ENCODE measurements at regions of chr1 and their contacts with region 1.

Region 1: GRCh38 chr1:96580920-96581319 is 140.7 kb upstream of the PTBP2 start:
- DNase-seq: peak in 1 of 2 experiments; percentile 44
- H3K4me3 ChIP-seq: peak overlapping the region in 2 of 4 experiments; percentile 4 to 40; a peak in 2 of 8 replicates
- H3K27ac ChIP-seq: no peak overlapping the region
- H3K4me1 ChIP-seq: peaks cover 2 to 20% (median 9%) of the 10 kb centered on the region in 4 experiments; a peak in 5 of 7 replicates
- H3K27me3 ChIP-seq: no peaks in the 10 kb centered on the region
- CTCF ChIP-seq: no peak
- EP300 ChIP-seq: no peak
- POLR2A ChIP-seq: no peak
- RAD21 ChIP-seq: peak; percentile 14 to 36; a peak in 2 of 4 replicates

Region 2: GRCh38 chr1:96498744-96499340 is 82.1 kb before region 1 on chr1:
- CTCF ChIA-PET with region 1: no interaction called
- POLR2A ChIA-PET with region 1: no interaction called
- DNase-seq: no peak
- H3K4me3 ChIP-seq: no peak overlapping the region
- H3K27ac ChIP-seq: no peak overlapping the region
- H3K4me1 ChIP-seq: no peaks in the 10 kb centered on the region
- H3K27me3 ChIP-seq: no peaks in the 10 kb centered on the region
- CTCF ChIP-seq: no peak
- EP300 ChIP-seq: no peak
- POLR2A ChIP-seq: no peak
- RAD21 ChIP-seq: peak in 1 of 2 experiments; percentile 22; a peak in 1 of 4 replicates

Region 3: GRCh38 chr1:96596226-96596922 is 15.5 kb after region 1 on chr1:
- CTCF ChIA-PET with region 1: interaction called, 44 read pairs
- POLR2A ChIA-PET with region 1: no interaction called
- DNase-seq: peak; percentile 50 to 82
- H3K4me3 ChIP-seq: no peak overlapping the region
- H3K27ac ChIP-seq: no peak overlapping the region
- H3K4me1 ChIP-seq: peaks cover 0 to 7% (median under 1%) of the 10 kb centered on the region in 4 experiments; a peak in 3 of 7 replicates
- H3K27me3 ChIP-seq: no peaks in the 10 kb centered on the region
- CTCF ChIP-seq: peak; percentile 63 to 89 (median 76)
- EP300 ChIP-seq: no peak
- POLR2A ChIP-seq: no peak
- RAD21 ChIP-seq: peak; percentile 47 to 69

Measured in H1 (cell line).